Heart left ventricle (tissue), 16 donors: ENCODE measurements at regions of chr15 and their contacts with region 1.

Region 1: DNA sequence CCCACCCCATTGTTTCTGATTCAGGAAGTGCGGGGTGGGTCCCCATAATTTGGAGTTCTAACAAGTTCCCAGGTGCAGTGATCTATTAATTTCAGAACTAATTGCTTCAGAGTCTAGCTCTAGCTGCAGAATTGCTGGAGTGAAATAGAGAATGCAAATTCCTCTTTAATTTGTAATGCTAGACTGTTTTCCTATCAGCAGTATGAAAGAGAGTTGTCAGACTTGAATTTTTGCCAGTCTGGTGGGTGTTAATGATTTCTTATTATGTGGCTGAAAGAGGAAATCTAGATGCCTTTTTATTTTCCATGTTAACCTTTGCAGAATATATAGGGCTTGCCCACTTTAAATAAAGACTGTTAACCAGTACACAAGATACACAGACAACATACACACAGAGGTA is 23.7 kb downstream of the APH1B start:
- DNase-seq: no peak
- ATAC-seq: no peak
- H3K4me3 ChIP-seq: no peak overlapping the region
- H3K27ac ChIP-seq: no peak overlapping the region
- H3K4me1 ChIP-seq: peaks cover 0 to 8% (median 0%) of the 10 kb centered on the region in 12 donors
- H3K27me3 ChIP-seq: no peaks in the 10 kb centered on the region
- CTCF ChIP-seq: no peak
- POLR2A ChIP-seq: no peak

Region 2: GRCh38 chr15:63396152-63396928 is 95.3 kb after region 1 on chr15:
- intact Hi-C with region 1: loop called in 1 of 10 experiments (anchors 5 kb)
- DNase-seq: no peak
- ATAC-seq: no peak
- H3K4me3 ChIP-seq: no peak overlapping the region
- H3K27ac ChIP-seq: no peak overlapping the region
- H3K4me1 ChIP-seq: peaks cover 0 to 8% (median 0%) of the 10 kb centered on the region in 12 donors
- H3K27me3 ChIP-seq: no peaks in the 10 kb centered on the region
- CTCF ChIP-seq: no peak
- POLR2A ChIP-seq: no peak